GM10248 (cell line): ENCODE measurements at regions of chr1 and their contacts with region 1.

Region 1: GRCh38 chr1:193183019-193183627 is 3.3 kb downstream of the B3GALT2 start:
- DNase-seq: peak; percentile 9
- CTCF ChIP-seq: peak; percentile 71

Region 2: GRCh38 chr1:193338194-193338593 is 155.1 kb after region 1 on chr1:
- CTCF ChIA-PET with region 1: interaction called, 11 read pairs
- POLR2A ChIA-PET with region 1: no interaction called
- DNase-seq: peak; percentile 28
- CTCF ChIP-seq: no peak